ENCODE measurements at regions of chrX and their contacts with region 1.

Region 1: GRCh38 chrX:19904778-19905367 is 17.5 kb upstream of the SH3KBP1 start:
- DNase-seq: peak; percentile 57
- H3K4me3 Mint-ChIP-seq: no peak overlapping the region
- H3K27ac Mint-ChIP-seq: no peak overlapping the region
- H3K4me1 Mint-ChIP-seq: no peaks in the 10 kb centered on the region
- H3K27me3 Mint-ChIP-seq: peaks cover 52% of the 10 kb centered on the region
- CTCF ChIP-seq: peak; percentile 60

Region 2: GRCh38 chrX:19571711-19572110 is 333.2 kb before region 1 on chrX:
- CTCF ChIA-PET with region 1: no interaction called
- POLR2A ChIA-PET with region 1: no interaction called
- intact Hi-C with region 1: no loop called
- DNase-seq: no peak
- H3K4me3 Mint-ChIP-seq: no peak overlapping the region
- H3K27ac Mint-ChIP-seq: no peak overlapping the region
- H3K4me1 Mint-ChIP-seq: no peaks in the 10 kb centered on the region
- H3K27me3 Mint-ChIP-seq: peaks cover 10% of the 10 kb centered on the region
- CTCF ChIP-seq: no peak

Region 3: GRCh38 chrX:19839770-19840254 is 65.1 kb before region 1 on chrX:
- CTCF ChIA-PET with region 1: no interaction called
- POLR2A ChIA-PET with region 1: no interaction called
- intact Hi-C with region 1: no loop called
- DNase-seq: peak; percentile 47
- H3K4me3 Mint-ChIP-seq: no peak overlapping the region
- H3K27ac Mint-ChIP-seq: no peak overlapping the region
- H3K4me1 Mint-ChIP-seq: peaks cover 11% of the 10 kb centered on the region
- H3K27me3 Mint-ChIP-seq: peaks cover 30% of the 10 kb centered on the region
- CTCF ChIP-seq: no peak

Region 4: DNA sequence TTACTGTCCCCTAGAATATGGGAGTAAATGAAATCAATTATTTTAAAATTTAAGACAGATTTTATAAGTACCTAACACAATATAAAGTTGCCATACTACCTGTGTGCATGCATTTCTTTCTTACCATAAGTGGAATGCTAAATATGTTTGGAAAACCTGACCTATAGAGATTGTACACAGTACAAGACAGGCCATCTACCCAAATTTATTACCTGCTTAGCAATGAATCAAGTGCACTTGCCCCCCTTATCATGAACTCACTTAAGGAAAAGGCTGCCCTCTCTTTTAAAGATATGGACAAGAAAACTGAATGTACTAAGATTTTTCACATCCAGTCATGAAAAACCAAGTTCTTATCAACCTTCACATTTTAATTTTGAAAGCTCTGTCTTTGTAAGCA is 10.9 kb after region 1 on chrX:
- CTCF ChIA-PET with region 1: interaction called, 11 read pairs
- POLR2A ChIA-PET with region 1: no interaction called
- intact Hi-C with region 1: no loop called
- DNase-seq: no peak
- H3K4me3 Mint-ChIP-seq: no peak overlapping the region
- H3K27ac Mint-ChIP-seq: no peak overlapping the region
- H3K4me1 Mint-ChIP-seq: no peaks in the 10 kb centered on the region
- H3K27me3 Mint-ChIP-seq: peaks cover 21% of the 10 kb centered on the region
- CTCF ChIP-seq: no peak

Region 5: GRCh38 chrX:19947612-19948011 is 42.7 kb after region 1 on chrX:
- CTCF ChIA-PET with region 1: no interaction called
- POLR2A ChIA-PET with region 1: no interaction called
- intact Hi-C with region 1: no loop called
- DNase-seq: no peak
- H3K4me3 Mint-ChIP-seq: no peak overlapping the region
- H3K27ac Mint-ChIP-seq: no peak overlapping the region
- H3K4me1 Mint-ChIP-seq: no peaks in the 10 kb centered on the region
- H3K27me3 Mint-ChIP-seq: peaks cover 45% of the 10 kb centered on the region
- CTCF ChIP-seq: no peak

Region 6: GRCh38 chrX:20060961-20061748 is 156.3 kb after region 1 on chrX:
- CTCF ChIA-PET with region 1: interaction called, 66 read pairs
- POLR2A ChIA-PET with region 1: no interaction called
- intact Hi-C with region 1: no loop called
- DNase-seq: no peak
- H3K4me3 Mint-ChIP-seq: no peak overlapping the region
- H3K27ac Mint-ChIP-seq: no peak overlapping the region
- H3K4me1 Mint-ChIP-seq: peaks cover 13% of the 10 kb centered on the region
- H3K27me3 Mint-ChIP-seq: peaks cover 73% of the 10 kb centered on the region
- CTCF ChIP-seq: no peak

Region 7: DNA sequence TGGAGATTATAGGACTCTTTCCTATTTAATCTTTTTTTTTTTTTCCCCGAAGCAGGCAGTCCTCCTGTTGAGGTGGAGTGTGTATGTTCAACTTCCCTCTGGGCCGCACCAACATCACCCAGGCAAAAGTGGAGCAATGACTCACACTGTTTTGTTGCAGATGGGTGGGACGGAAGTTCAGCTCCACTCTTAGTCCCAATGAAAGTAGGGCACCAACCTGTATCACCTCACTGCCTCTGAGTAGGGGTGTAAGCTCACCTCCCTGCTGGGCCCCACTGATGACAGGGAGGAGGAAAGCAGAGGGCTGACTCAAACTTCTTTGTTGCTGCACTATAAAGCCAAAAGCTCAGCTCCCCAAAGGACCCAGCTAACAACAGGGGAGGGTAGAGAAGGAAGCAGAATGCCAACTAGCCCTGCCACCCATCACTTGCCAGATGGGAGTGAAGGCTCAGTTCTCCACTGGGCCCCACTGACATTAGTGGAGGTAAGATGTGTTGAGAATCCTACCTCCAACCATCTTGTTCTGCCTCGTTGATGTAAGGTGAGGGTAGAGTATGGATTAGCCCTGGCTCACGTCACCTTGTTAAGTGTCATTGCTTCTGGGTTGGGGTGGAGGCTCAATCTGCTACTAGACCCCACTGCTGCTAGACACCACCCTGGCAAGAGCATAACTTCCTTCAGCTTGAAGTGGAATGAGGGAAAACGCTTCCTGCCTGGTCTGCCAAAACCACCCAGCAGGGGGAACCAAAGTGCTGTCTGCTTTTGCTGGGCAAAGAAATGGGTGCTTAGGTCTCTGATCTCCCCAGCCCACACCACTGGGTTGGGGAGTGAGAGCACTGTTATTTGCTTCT is 347.7 kb after region 1 on chrX:
- CTCF ChIA-PET with region 1: no interaction called
- POLR2A ChIA-PET with region 1: no interaction called
- intact Hi-C with region 1: loop called (anchors 10 kb)
- DNase-seq: peak; percentile 73
- H3K4me3 Mint-ChIP-seq: no peak overlapping the region
- H3K27ac Mint-ChIP-seq: no peak overlapping the region
- H3K4me1 Mint-ChIP-seq: no peaks in the 10 kb centered on the region
- H3K27me3 Mint-ChIP-seq: peaks cover 42% of the 10 kb centered on the region
- CTCF ChIP-seq: peak; percentile 73